Naive thymus-derived CD8-positive, alpha-beta T cell (primary cell): ENCODE measurements at regions of chr22 and their contacts with region 1.

Region 1: GRCh38 chr22:23178512-23179254 is 1.6 kb upstream of the BCR start:
- DNase-seq: peak; percentile 34 to 79 (median 62)
- ATAC-seq: peak; percentile 13 to 19
- H3K4me3 Mint-ChIP-seq: peak overlapping the region; percentile 44 to 94 (median 82)
- H3K27ac Mint-ChIP-seq: peak overlapping the region; percentile 57 to 93 (median 88)
- H3K4me1 Mint-ChIP-seq: peaks cover 36 to 64% (median 49%) of the 10 kb centered on the region in 4 donors
- H3K27me3 Mint-ChIP-seq: no peaks in the 10 kb centered on the region

Region 2: DNA sequence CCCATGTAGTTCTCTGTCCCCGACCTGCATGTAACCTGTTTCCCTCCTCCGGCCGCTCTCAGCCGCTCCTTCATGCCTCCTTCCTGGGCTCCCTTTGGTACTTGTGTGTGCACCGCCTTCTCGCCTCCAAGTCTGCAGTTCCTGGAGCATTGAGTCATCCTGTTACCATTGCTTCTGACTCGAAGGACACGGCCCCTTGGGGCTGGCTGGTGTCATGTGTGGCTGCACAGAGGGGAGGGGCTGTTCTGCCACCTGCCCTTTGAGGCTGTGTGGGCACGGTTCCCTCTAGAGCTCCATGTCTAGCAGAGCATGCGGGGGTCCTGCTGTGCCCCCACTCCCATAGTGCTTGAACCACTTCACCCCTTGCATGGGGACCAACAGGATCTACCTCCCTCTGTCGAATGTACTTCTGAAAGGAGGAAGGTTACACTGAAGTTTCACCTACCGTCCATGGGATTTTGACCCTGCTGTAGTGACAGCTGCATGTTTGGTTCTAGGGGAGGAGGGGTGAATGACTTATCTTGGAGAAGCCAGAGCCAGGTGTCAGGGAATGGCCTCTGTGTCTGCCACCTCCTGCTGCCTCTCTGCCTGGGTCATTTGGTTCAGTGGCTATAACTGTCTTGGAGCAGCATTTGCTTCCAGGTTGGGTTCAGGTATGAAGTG is 41.3 kb after region 1 on chr22:
- POLR2A ChIA-PET with region 1: interaction called, 15 read pairs
- DNase-seq: peak in 1 of 10 donors; percentile 33
- ATAC-seq: peak; percentile 21 to 45
- H3K4me3 Mint-ChIP-seq: peak overlapping the region; percentile 68 to 95 (median 78)
- H3K27ac Mint-ChIP-seq: peak overlapping the region; percentile 81 to 96 (median 93)
- H3K4me1 Mint-ChIP-seq: peaks cover 72 to 100% (median 100%) of the 10 kb centered on the region in 4 donors
- H3K27me3 Mint-ChIP-seq: no peaks in the 10 kb centered on the region

Region 3: DNA sequence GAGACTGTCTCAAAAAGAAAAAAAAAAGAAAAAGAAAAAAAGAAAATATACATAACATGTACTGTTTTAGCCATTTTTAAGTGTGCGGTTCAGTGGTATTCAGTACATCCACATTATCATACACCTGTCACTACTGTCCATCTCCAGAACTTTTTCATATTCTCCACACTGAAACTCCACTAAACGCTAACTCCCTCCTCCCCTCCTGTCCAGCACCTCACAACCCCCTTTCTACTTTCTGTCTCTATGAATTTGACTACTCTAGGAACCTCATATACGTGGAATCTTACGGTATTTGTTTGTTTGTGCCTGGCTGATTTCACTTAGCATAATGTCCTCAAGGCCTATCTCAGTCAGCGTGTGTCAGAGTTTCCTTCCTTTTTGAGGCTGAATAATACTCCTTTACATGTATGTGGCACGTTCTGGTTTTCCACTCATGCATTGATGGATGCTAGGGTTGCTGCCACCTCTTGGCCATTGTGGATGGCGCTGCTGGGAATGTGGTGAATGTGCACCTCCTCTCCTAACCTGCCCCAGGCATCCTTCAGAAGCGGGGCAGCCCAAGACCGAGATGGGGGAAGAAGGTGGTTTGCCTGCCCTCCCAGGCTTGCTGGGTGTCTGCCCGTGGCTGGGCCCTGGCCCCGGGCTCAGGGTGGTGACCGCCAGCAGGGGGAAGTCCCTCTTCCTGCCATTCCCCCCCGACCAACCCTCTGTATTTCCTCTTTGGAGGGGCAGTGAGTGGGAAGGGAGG is 62.1 kb after region 1 on chr22:
- POLR2A ChIA-PET with region 1: interaction called, 29 read pairs
- DNase-seq: no peak
- ATAC-seq: no peak
- H3K4me3 Mint-ChIP-seq: peak overlapping the region in 4 of 10 donors; percentile 17 to 78 (median 48)
- H3K27ac Mint-ChIP-seq: peak overlapping the region; percentile 76 to 99 (median 94)
- H3K4me1 Mint-ChIP-seq: peaks cover 46 to 89% (median 78%) of the 10 kb centered on the region in 4 donors
- H3K27me3 Mint-ChIP-seq: no peaks in the 10 kb centered on the region

Region 4: GRCh38 chr22:23289851-23290724 is 111.4 kb after region 1 on chr22:
- POLR2A ChIA-PET with region 1: interaction called, 11 read pairs
- DNase-seq: peak; percentile 32 to 75 (median 52)
- ATAC-seq: peak; percentile 67 to 72
- H3K4me3 Mint-ChIP-seq: no peak overlapping the region
- H3K27ac Mint-ChIP-seq: peak overlapping the region in 2 of 10 donors; percentile 49 to 76
- H3K4me1 Mint-ChIP-seq: peaks cover 0 to 5% (median 2%) of the 10 kb centered on the region in 4 donors
- H3K27me3 Mint-ChIP-seq: no peaks in the 10 kb centered on the region

Region 5: GRCh38 chr22:23380230-23380573 is 201.5 kb after region 1 on chr22:
- POLR2A ChIA-PET with region 1: no interaction called
- DNase-seq: no peak
- ATAC-seq: no peak
- H3K4me3 Mint-ChIP-seq: no peak overlapping the region
- H3K27ac Mint-ChIP-seq: no peak overlapping the region
- H3K4me1 Mint-ChIP-seq: no peaks in the 10 kb centered on the region
- H3K27me3 Mint-ChIP-seq: peaks cover 0 to 6% (median 0%) of the 10 kb centered on the region in 5 donors